ENCODE measurements at regions of chr1 and their contacts with region 1.

Region 1: DNA sequence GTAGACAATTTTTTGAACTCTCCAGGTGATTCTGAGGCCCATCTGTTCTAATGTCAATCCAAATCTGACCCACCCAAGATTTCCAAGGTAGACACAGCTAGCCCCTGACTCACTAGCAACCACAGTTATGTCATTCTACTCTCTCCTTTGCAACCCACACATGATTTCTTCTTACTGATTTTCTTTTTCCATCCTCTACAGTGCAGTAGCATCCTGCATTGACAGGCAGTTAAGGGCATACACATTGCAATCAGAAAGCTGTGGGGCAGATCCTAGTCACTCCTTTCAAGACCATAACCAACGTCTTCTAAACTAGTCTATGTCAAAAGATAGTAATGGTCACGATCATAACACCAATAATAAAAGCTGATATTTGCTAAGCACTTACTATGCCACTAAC is 54.2 kb downstream of the JAK1 start:
- DNase-seq: no peak
- ATAC-seq: no peak
- H3K4me3 Mint-ChIP-seq: no peak overlapping the region
- H3K27ac Mint-ChIP-seq: peak overlapping the region; percentile 9
- H3K4me1 Mint-ChIP-seq: peaks cover 95% of the 10 kb centered on the region
- H3K27me3 Mint-ChIP-seq: no peaks in the 10 kb centered on the region
- CTCF ChIP-seq: no peak

Region 2: DNA sequence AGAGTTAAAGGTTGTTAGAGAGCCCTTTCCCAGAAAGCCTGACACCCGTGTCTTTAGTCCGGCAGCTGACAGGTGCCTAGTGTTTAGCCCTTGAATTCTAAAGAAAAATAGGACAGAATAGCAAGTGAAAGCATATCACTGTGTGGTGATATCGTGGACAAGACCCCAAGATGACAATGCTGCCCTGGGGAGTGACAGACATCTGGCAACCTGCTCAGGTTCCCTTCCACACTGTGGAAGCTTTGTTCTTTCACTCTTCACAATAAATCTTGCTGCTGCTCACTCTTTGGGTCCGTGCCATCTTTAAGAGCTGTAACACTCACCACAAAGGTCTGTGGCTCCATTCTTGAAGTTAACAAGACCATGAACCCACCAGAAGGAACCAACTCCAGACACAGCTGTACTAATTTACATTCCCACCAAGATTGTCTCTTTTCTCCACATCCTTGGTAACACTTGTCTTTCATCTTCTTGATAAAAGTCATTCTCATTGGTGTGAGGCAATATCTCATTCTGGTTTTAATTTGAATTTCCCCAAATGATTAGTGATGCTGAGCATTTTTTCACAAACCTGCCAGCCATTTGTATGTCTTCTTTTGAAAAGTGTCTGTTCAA is 1514.2 kb after region 1 on chr1:
- CTCF ChIA-PET with region 1: no interaction called
- POLR2A ChIA-PET with region 1: interaction called, 11 read pairs
- intact Hi-C with region 1: no loop called
- DNase-seq: no peak
- ATAC-seq: peak; percentile 25
- H3K4me3 Mint-ChIP-seq: peak overlapping the region; percentile 35
- H3K27ac Mint-ChIP-seq: peak overlapping the region; percentile 19
- H3K4me1 Mint-ChIP-seq: peaks cover 12% of the 10 kb centered on the region
- H3K27me3 Mint-ChIP-seq: no peaks in the 10 kb centered on the region
- CTCF ChIP-seq: no peak